Dendritic cell treated with granulocyte-macrophage colony-stimulating factor and Interleukin-4, amounts not matched to agents 40 ng/mL and 50 ng/mL, for 4 days (primary cell): ENCODE measurements at regions of chr14 and their contacts with region 1.

Region 1: GRCh38 chr14:75088574-75089373 is 19.3 kb downstream of the ZC2HC1C start:
- H3K4me3 Mint-ChIP-seq: no peak overlapping the region
- H3K27ac Mint-ChIP-seq: no peak overlapping the region
- H3K4me1 Mint-ChIP-seq: no peaks in the 10 kb centered on the region
- H3K27me3 Mint-ChIP-seq: no peaks in the 10 kb centered on the region

Region 2: GRCh38 chr14:74860906-74861733 is 227.7 kb before region 1 on chr14:
- intact Hi-C with region 1: loop called (anchors 2 kb)
- H3K4me3 Mint-ChIP-seq: no peak overlapping the region
- H3K27ac Mint-ChIP-seq: no peak overlapping the region
- H3K4me1 Mint-ChIP-seq: peaks cover 22% of the 10 kb centered on the region
- H3K27me3 Mint-ChIP-seq: no peaks in the 10 kb centered on the region

Region 3: DNA sequence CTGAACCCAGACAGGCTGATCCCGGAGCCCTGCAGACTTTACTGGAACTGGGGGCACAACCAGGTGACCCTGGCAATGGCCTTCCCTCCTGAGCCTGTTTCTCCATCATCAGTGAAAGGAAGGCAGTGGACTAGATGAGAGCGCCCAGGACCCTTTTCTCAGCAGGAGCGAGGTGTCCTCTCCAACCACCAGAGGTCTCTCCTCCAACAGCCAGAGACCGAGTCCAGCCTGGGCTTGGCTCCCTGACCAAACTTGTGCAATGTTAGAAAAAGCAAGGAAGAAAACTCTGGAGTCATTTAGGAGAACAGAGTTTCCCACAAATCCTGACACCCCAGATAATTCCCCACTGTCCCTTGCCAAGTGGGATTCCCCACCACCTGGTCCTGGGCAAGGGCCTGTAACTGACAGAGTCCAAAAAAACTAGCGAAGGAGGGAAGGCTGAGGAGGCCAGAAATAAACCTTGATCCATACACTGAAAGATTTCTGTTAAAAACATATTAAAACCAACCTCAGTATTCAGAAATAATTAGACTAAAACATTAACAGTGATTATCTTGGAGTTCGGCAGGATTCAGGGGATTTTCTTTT is 174.7 kb before region 1 on chr14:
- intact Hi-C with region 1: loop called (anchors 1 kb)
- H3K4me3 Mint-ChIP-seq: no peak overlapping the region
- H3K27ac Mint-ChIP-seq: no peak overlapping the region
- H3K4me1 Mint-ChIP-seq: peaks cover 9% of the 10 kb centered on the region
- H3K27me3 Mint-ChIP-seq: no peaks in the 10 kb centered on the region

Region 4: GRCh38 chr14:74945823-74946682 is 142.7 kb before region 1 on chr14:
- intact Hi-C with region 1: loop called (anchors 1 kb)
- H3K4me3 Mint-ChIP-seq: peak overlapping the region; percentile 24
- H3K27ac Mint-ChIP-seq: peak overlapping the region; percentile 60
- H3K4me1 Mint-ChIP-seq: peaks cover 32% of the 10 kb centered on the region
- H3K27me3 Mint-ChIP-seq: peaks cover 8% of the 10 kb centered on the region

Region 5: GRCh38 chr14:75032939-75033338 is 55.8 kb before region 1 on chr14:
- intact Hi-C with region 1: loop called (anchors 10 kb)
- H3K4me3 Mint-ChIP-seq: no peak overlapping the region
- H3K27ac Mint-ChIP-seq: no peak overlapping the region
- H3K4me1 Mint-ChIP-seq: no peaks in the 10 kb centered on the region
- H3K27me3 Mint-ChIP-seq: no peaks in the 10 kb centered on the region

Region 6: GRCh38 chr14:75132382-75133086 is 43.8 kb after region 1 on chr14:
- intact Hi-C with region 1: no loop called
- H3K4me3 Mint-ChIP-seq: no peak overlapping the region
- H3K27ac Mint-ChIP-seq: no peak overlapping the region
- H3K4me1 Mint-ChIP-seq: peaks cover 25% of the 10 kb centered on the region
- H3K27me3 Mint-ChIP-seq: no peaks in the 10 kb centered on the region